ENCODE measurements at regions of chr15 and their contacts with region 1.

Region 1: GRCh38 chr15:35496585-35496984 is 49.4 kb downstream of the DPH6 start:
- DNase-seq: no peak
- ATAC-seq: no peak; the same call in 1 of the 2 replicates
- H3K4me3 ChIP-seq: no peak overlapping the region
- H3K27ac ChIP-seq: no peak overlapping the region
- H3K4me1 ChIP-seq: 0 out of 2 replicates have a peak, but pooled peaks cover 2% of the 10 kb centered on the region
- H3K27me3 ChIP-seq: no peaks in the 10 kb centered on the region
- CTCF ChIP-seq: no peak
- POLR2A ChIP-seq: no peak
- RAD21 ChIP-seq: no peak

Region 2: GRCh38 chr15:35306361-35306981 is 190.1 kb before region 1 on chr15:
- CTCF ChIA-PET with region 1: no interaction called
- POLR2A ChIA-PET with region 1: no interaction called
- dilution Hi-C with region 1: no loop called
- in situ Hi-C with region 1: no loop called
- intact Hi-C with region 1: loop called (anchors 5 kb)
- DNase-seq: peak; percentile 76
- ATAC-seq: peak; percentile 78
- H3K4me3 ChIP-seq: no peak overlapping the region
- H3K27ac ChIP-seq: peak overlapping the region; percentile 91
- H3K4me1 ChIP-seq: peaks cover 16% of the 10 kb centered on the region
- H3K27me3 ChIP-seq: no peaks in the 10 kb centered on the region
- CTCF ChIP-seq: no peak
- POLR2A ChIP-seq: no peak
- RAD21 ChIP-seq: no peak